ENCODE measurements at regions of chr3 and their contacts with region 1.

Region 1: DNA sequence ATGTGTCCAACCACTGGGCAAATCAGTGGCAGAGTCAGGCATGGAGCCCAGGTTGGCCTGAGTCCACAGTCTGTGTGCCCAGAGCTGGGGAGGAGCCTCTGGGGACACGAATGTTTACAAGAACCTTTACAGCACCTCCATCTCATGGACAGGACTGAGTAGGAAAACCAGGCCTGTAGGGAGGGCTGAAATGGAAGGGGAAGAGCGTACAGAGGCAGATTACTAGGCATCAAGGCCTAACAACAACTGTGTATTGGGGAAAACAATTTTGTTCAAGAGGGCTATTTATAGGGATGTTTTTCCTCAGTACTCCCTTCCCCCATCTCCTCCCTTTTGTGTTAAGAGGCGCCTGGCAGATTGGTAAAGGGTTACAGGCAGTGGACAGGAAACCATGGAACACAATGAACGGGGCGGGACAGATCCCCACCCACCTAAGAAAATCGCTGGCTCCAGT is 15.1 kb upstream of the ARHGAP31 start:
- DNase-seq: peak; percentile 74 to 78
- ATAC-seq: peak; percentile 89 to 96 (median 93)
- H3K4me3 ChIP-seq: peak overlapping the region in 3 of 10 donors; percentile 2 to 20 (median 10)
- H3K27ac ChIP-seq: peak overlapping the region; percentile 74 to 94 (median 89)
- H3K4me1 ChIP-seq: peaks cover 5 to 58% (median 23%) of the 10 kb centered on the region in 9 donors
- H3K27me3 ChIP-seq: no peaks in the 10 kb centered on the region
- CTCF ChIP-seq: no peak

Region 2: GRCh38 chr3:119293871-119294695 is 15.0 kb after region 1 on chr3 and contains the start of gene ARHGAP31:
- intact Hi-C with region 1: loop called in 5 of 10 experiments (anchors 1 to 2 kb)
- DNase-seq: peak; percentile 78 to 86
- ATAC-seq: peak; percentile 72 to 87 (median 82)
- H3K4me3 ChIP-seq: peak within 1 kb of the TSS; percentile 63 to 97 (median 87)
- H3K27ac ChIP-seq: peak within 1 kb of the TSS; percentile 96 to 100 (median 99)
- H3K4me1 ChIP-seq: peaks cover 18 to 54% (median 46%) of the 10 kb centered on the region in 9 donors
- H3K27me3 ChIP-seq: no peaks in the 10 kb centered on the region
- CTCF ChIP-seq: no peak
- total RNA-seq, gene ARHGAP31: 30.4 to 71.1 (median 37.2) TPM

Region 3: GRCh38 chr3:119331661-119332060 is 52.5 kb after region 1 on chr3:
- intact Hi-C with region 1: loop called in 1 of 10 experiments (anchors 5 kb)
- DNase-seq: no peak
- ATAC-seq: peak in 4 of 8 donors; percentile 21 to 40 (median 28)
- H3K4me3 ChIP-seq: no peak overlapping the region
- H3K27ac ChIP-seq: peak overlapping the region in 8 of 10 donors; percentile 27 to 71 (median 52)
- H3K4me1 ChIP-seq: peaks cover 9 to 83% (median 46%) of the 10 kb centered on the region in 9 donors
- H3K27me3 ChIP-seq: no peaks in the 10 kb centered on the region
- CTCF ChIP-seq: no peak

Region 4: GRCh38 chr3:119352849-119353502 is 73.8 kb after region 1 on chr3:
- intact Hi-C with region 1: loop called in 7 of 10 experiments (anchors 2 to 10 kb)
- DNase-seq: peak in 1 of 2 donors; percentile 20
- ATAC-seq: peak in 7 of 8 donors; percentile 47 to 72 (median 65)
- H3K4me3 ChIP-seq: no peak overlapping the region
- H3K27ac ChIP-seq: peak overlapping the region in 8 of 10 donors; percentile 6 to 86 (median 62)
- H3K4me1 ChIP-seq: peaks cover 6 to 80% (median 76%) of the 10 kb centered on the region in 9 donors
- H3K27me3 ChIP-seq: no peaks in the 10 kb centered on the region
- CTCF ChIP-seq: peak; percentile 16 to 63 (median 43)

Region 5: GRCh38 chr3:119463171-119464169 is 184.3 kb after region 1 on chr3 and contains the start of gene TMEM39A:
- intact Hi-C with region 1: loop called in 7 of 10 experiments (anchors 5 to 10 kb)
- DNase-seq: peak; percentile 100
- ATAC-seq: peak; percentile 97 to 99 (median 99)
- H3K4me3 ChIP-seq: peak within 1 kb of the TSS; percentile 63 to 94 (median 78)
- H3K27ac ChIP-seq: peak within 1 kb of the TSS; percentile 53 to 93 (median 80)
- H3K4me1 ChIP-seq: peaks cover 0 to 56% (median 26%) of the 10 kb centered on the region in 9 donors
- H3K27me3 ChIP-seq: no peaks in the 10 kb centered on the region
- CTCF ChIP-seq: peak in 4 of 9 donors; percentile 5 to 34 (median 18)
- total RNA-seq, gene TMEM39A: 9.7 to 25.8 (median 13.5) TPM

Region 6: DNA sequence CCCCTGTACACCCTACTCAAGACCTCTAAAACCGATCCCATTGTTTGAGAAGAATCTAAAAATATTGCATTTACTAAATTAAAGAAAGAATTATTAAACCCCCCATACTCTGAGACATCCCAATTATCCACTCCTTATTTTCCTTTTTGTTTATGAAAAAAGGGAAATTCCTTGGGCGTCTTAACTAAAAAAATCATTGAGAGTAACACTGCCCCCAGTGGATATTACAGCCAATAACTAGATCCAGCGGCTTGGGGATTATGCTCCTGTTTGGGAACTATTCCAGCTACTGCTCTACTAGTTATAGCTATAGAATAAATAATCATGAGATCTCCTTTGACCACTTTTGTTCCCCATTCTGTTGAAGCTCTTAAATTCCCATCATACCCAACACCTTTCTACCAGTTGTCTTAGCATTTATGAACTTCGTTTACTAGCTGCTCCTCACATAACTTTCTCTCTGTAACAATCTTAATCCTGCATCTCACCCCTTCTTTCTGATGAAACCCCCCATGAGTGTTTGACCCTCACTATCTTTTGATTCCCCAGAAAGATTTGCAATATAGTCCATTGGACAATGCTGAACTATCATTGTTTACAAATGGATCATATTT is 411.0 kb after region 1 on chr3:
- intact Hi-C with region 1: loop called in 2 of 10 experiments (anchors 5 to 10 kb)
- DNase-seq: no peak
- ATAC-seq: no peak
- H3K4me3 ChIP-seq: no peak overlapping the region
- H3K27ac ChIP-seq: no peak overlapping the region
- H3K4me1 ChIP-seq: no peaks in the 10 kb centered on the region
- H3K27me3 ChIP-seq: no peaks in the 10 kb centered on the region
- CTCF ChIP-seq: peak in 7 of 9 donors; percentile 47 to 61 (median 50)

Measured in heart right ventricle (tissue), 16 donors.